Activated CD8-positive, alpha-beta T cell treated with anti-CD3 and anti-CD28 coated beads, Interleukin-2, amount 10 ng/mL, durations not matched to agents 7 days and 5 days (primary cell): ENCODE measurements at regions of chr5 and their contacts with region 1.

Region 1: GRCh38 chr5:39217365-39218281 is 1.7 kb downstream of the FYB1 start:
- DNase-seq: peak; percentile 89
- ATAC-seq: peak; percentile 77
- H3K4me3 Mint-ChIP-seq: peak overlapping the region; percentile 68
- H3K27ac Mint-ChIP-seq: peak overlapping the region; percentile 80
- H3K4me1 Mint-ChIP-seq: peaks cover 55% of the 10 kb centered on the region
- H3K27me3 Mint-ChIP-seq: no peaks in the 10 kb centered on the region

Region 2: GRCh38 chr5:38922199-38922598 is 295.4 kb before region 1 on chr5:
- CTCF ChIA-PET with region 1: no interaction called
- POLR2A ChIA-PET with region 1: no interaction called
- DNase-seq: peak; percentile 58
- ATAC-seq: peak; percentile 67
- H3K4me3 Mint-ChIP-seq: no peak overlapping the region
- H3K27ac Mint-ChIP-seq: no peak overlapping the region
- H3K4me1 Mint-ChIP-seq: no peaks in the 10 kb centered on the region
- H3K27me3 Mint-ChIP-seq: peaks cover 28% of the 10 kb centered on the region

Region 3: GRCh38 chr5:39158127-39158593 is 59.5 kb before region 1 on chr5:
- CTCF ChIA-PET with region 1: interaction called, 46 read pairs
- POLR2A ChIA-PET with region 1: no interaction called
- DNase-seq: no peak
- ATAC-seq: no peak
- H3K4me3 Mint-ChIP-seq: no peak overlapping the region
- H3K27ac Mint-ChIP-seq: no peak overlapping the region
- H3K4me1 Mint-ChIP-seq: peaks cover 78% of the 10 kb centered on the region
- H3K27me3 Mint-ChIP-seq: no peaks in the 10 kb centered on the region

Region 4: DNA sequence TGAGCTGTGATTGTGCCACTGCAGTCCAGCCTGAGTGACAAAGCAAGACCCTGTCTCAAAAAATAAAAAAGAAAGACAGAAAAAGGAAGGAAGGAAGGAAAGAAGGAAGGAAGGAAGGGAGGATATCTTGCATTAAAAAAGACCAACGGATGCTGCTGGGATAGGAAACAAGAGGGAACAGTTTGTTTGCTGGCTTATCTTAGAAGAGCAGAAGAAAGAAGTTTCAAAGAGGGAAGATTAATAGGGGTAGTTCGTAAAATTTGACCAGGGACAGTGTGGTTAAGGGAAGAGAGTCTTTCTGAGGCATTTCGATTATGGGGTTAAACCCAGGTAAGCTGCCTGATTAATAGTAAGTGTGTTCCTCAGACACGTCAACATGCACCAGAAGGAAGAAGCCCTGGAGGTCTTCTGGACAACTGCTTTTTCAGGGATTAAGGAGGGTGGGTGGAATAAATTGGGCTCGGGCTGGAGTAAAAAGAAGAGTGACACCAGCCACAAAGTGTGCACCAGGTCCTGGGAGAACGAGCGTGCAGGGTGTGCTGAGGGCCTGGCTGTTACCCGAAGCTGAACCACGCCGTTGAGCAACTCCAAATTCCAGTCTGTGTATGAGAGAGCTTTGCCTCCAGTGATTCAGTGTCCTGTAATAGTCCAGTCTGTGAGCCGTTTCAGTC is 23.0 kb before region 1 on chr5:
- CTCF ChIA-PET with region 1: interaction called, 175 read pairs
- POLR2A ChIA-PET with region 1: interaction called, 84 read pairs
- DNase-seq: peak; percentile 45
- ATAC-seq: peak; percentile 24
- H3K4me3 Mint-ChIP-seq: peak overlapping the region; percentile 79
- H3K27ac Mint-ChIP-seq: peak overlapping the region; percentile 87
- H3K4me1 Mint-ChIP-seq: peaks cover 75% of the 10 kb centered on the region
- H3K27me3 Mint-ChIP-seq: no peaks in the 10 kb centered on the region

Region 5: DNA sequence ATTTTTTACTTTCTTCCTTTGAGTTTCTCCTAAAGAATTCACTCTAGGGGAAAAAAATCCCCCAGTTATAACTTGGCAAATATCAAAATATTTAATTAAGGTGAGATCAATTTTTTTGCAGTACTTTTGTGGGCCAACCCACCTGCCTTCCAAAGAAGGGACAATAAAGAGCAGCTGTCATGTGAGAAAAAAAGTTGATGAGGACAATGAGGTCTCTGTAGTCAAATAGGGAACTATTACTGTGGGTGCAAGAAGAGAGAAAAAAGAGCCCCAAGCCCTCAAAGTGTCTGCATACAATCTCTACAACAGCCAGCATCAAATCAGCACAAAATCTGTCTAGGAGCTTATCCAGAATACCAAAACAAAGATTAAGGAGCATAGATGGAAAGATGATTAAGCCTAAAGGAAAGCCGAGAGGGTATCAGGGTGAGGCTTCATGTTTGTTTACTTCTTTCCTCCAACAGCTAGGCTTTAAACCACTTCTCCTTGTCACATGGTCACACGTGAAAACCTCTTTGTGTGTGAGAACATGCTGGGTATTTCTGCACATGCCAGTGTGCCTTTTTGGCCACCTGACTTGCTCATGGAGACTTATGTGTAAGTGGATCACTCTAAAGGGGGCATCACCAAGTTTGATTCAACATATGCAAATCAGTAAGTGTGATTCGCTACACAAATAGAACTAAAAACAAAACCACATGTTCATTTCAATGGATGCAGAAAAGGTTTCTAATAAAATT is 20.9 kb after region 1 on chr5:
- CTCF ChIA-PET with region 1: interaction called, 108 read pairs
- POLR2A ChIA-PET with region 1: no interaction called
- DNase-seq: no peak
- ATAC-seq: no peak
- H3K4me3 Mint-ChIP-seq: no peak overlapping the region
- H3K27ac Mint-ChIP-seq: no peak overlapping the region
- H3K4me1 Mint-ChIP-seq: peaks cover 8% of the 10 kb centered on the region
- H3K27me3 Mint-ChIP-seq: no peaks in the 10 kb centered on the region

Region 6: DNA sequence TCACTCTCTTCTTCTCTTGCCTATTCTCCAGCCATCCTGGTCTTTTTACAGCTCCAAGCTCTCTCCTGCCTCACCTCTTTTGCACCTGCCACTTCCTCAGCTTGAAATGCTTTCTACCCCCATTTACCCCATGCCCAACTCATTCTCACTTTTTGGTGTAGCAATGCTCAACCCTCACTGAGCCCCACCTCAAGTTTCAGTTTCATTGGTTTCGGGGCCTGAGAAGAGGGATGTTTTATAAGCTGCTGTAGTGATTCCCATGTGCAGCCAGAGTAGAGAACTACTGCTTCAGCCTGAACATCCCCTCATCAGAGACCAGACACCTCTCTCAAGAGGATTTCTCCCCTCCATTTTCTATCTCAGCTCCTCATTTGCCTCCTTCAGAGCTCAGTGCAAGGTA is 46.9 kb after region 1 on chr5:
- CTCF ChIA-PET with region 1: interaction called, 51 read pairs
- POLR2A ChIA-PET with region 1: no interaction called
- DNase-seq: peak; percentile 61
- ATAC-seq: peak; percentile 90
- H3K4me3 Mint-ChIP-seq: peak overlapping the region; percentile 22
- H3K27ac Mint-ChIP-seq: peak overlapping the region; percentile 76
- H3K4me1 Mint-ChIP-seq: peaks cover 36% of the 10 kb centered on the region
- H3K27me3 Mint-ChIP-seq: no peaks in the 10 kb centered on the region

Region 7: GRCh38 chr5:39376293-39376714 is 158.7 kb after region 1 on chr5:
- CTCF ChIA-PET with region 1: interaction called, 41 read pairs
- POLR2A ChIA-PET with region 1: no interaction called
- DNase-seq: peak; percentile 55
- ATAC-seq: peak; percentile 75
- H3K4me3 Mint-ChIP-seq: no peak overlapping the region
- H3K27ac Mint-ChIP-seq: no peak overlapping the region
- H3K4me1 Mint-ChIP-seq: no peaks in the 10 kb centered on the region
- H3K27me3 Mint-ChIP-seq: peaks cover 8% of the 10 kb centered on the region